HCT116 (cell line): ENCODE measurements at regions of chr14 and their contacts with region 1.

Region 1: GRCh38 chr14:64704143-64704742 is at the start of gene PLEKHG3:
- DNase-seq: no peak
- ATAC-seq: peak; percentile 68
- H3K4me3 ChIP-seq: peak within 1 kb of the TSS; percentile 78 to 82
- H3K27ac ChIP-seq: peak within 1 kb of the TSS; percentile 86
- H3K4me1 ChIP-seq: peaks cover 46 to 61% of the 10 kb centered on the region in 2 experiments
- H3K27me3 ChIP-seq: no peaks in the 10 kb centered on the region
- CTCF ChIP-seq: no peak
- POLR2A ChIP-seq: no peak
- RAD21 ChIP-seq: no peak
- total RNA-seq, gene PLEKHG3: 55.6 TPM

Region 2: GRCh38 chr14:64720131-64720576 is 15.9 kb after region 1 on chr14:
- CTCF ChIA-PET with region 1: no interaction called
- POLR2A ChIA-PET with region 1: interaction called, 12 read pairs
- RAD21 ChIA-PET with region 1: interaction called in 1 of 2 experiments, 3 read pairs
- intact Hi-C with region 1: loop called (anchors 2 kb)
- DNase-seq: peak; percentile 93
- ATAC-seq: peak; percentile 91
- H3K4me3 ChIP-seq: peak overlapping the region; percentile 13 to 33; a peak in 3 of 4 replicates
- H3K27ac ChIP-seq: peak overlapping the region; percentile 76
- H3K4me1 ChIP-seq: peaks cover 94 to 100% of the 10 kb centered on the region in 2 experiments
- H3K27me3 ChIP-seq: no peaks in the 10 kb centered on the region
- CTCF ChIP-seq: no peak
- POLR2A ChIP-seq: no peak
- RAD21 ChIP-seq: no peak

Region 3: GRCh38 chr14:65003394-65003793 is 299.2 kb after region 1 on chr14:
- CTCF ChIA-PET with region 1: no interaction called
- POLR2A ChIA-PET with region 1: no interaction called
- RAD21 ChIA-PET with region 1: no interaction called
- intact Hi-C with region 1: no loop called
- DNase-seq: no peak
- ATAC-seq: no peak
- H3K4me3 ChIP-seq: no peak overlapping the region
- H3K27ac ChIP-seq: no peak overlapping the region
- H3K4me1 ChIP-seq: peaks cover 2 to 12% of the 10 kb centered on the region in 2 experiments; a peak in 2 of 4 replicates
- H3K27me3 ChIP-seq: no peaks in the 10 kb centered on the region
- CTCF ChIP-seq: no peak
- POLR2A ChIP-seq: no peak
- RAD21 ChIP-seq: no peak